Activated B cell treated with CpG ODN at 0.5 μM for 24 hours (primary cell): ENCODE measurements at regions of chr10 and their contacts with region 1.

Region 1: GRCh38 chr10:36094096-36094495 is 452.0 kb upstream of the FZD8 start:
- DNase-seq: no peak
- ATAC-seq: no peak
- H3K4me3 Mint-ChIP-seq: no peak overlapping the region
- H3K27ac Mint-ChIP-seq: no peak overlapping the region
- H3K4me1 Mint-ChIP-seq: no peaks in the 10 kb centered on the region
- H3K27me3 Mint-ChIP-seq: no peaks in the 10 kb centered on the region
- CTCF ChIP-seq: no peak

Region 2: GRCh38 chr10:36114913-36115312 is 20.8 kb after region 1 on chr10:
- CTCF ChIA-PET with region 1: no interaction called
- POLR2A ChIA-PET with region 1: no interaction called
- intact Hi-C with region 1: no loop called
- DNase-seq: no peak
- ATAC-seq: no peak
- H3K4me3 Mint-ChIP-seq: no peak overlapping the region
- H3K27ac Mint-ChIP-seq: no peak overlapping the region
- H3K4me1 Mint-ChIP-seq: no peaks in the 10 kb centered on the region
- H3K27me3 Mint-ChIP-seq: no peaks in the 10 kb centered on the region
- CTCF ChIP-seq: no peak

Region 3: GRCh38 chr10:36157486-36157885 is 63.4 kb after region 1 on chr10:
- CTCF ChIA-PET with region 1: no interaction called
- POLR2A ChIA-PET with region 1: no interaction called
- intact Hi-C with region 1: loop called (anchors 10 kb)
- DNase-seq: no peak
- ATAC-seq: no peak
- H3K4me3 Mint-ChIP-seq: no peak overlapping the region
- H3K27ac Mint-ChIP-seq: no peak overlapping the region
- H3K4me1 Mint-ChIP-seq: no peaks in the 10 kb centered on the region
- H3K27me3 Mint-ChIP-seq: no peaks in the 10 kb centered on the region
- CTCF ChIP-seq: no peak

Region 4: GRCh38 chr10:36224431-36224985 is 130.4 kb after region 1 on chr10:
- CTCF ChIA-PET with region 1: no interaction called
- POLR2A ChIA-PET with region 1: no interaction called
- intact Hi-C with region 1: no loop called
- DNase-seq: no peak
- ATAC-seq: no peak
- H3K4me3 Mint-ChIP-seq: no peak overlapping the region
- H3K27ac Mint-ChIP-seq: no peak overlapping the region
- H3K4me1 Mint-ChIP-seq: no peaks in the 10 kb centered on the region
- H3K27me3 Mint-ChIP-seq: no peaks in the 10 kb centered on the region
- CTCF ChIP-seq: no peak